ENCODE measurements at regions of chr4 and their contacts with region 1.

Region 1: DNA sequence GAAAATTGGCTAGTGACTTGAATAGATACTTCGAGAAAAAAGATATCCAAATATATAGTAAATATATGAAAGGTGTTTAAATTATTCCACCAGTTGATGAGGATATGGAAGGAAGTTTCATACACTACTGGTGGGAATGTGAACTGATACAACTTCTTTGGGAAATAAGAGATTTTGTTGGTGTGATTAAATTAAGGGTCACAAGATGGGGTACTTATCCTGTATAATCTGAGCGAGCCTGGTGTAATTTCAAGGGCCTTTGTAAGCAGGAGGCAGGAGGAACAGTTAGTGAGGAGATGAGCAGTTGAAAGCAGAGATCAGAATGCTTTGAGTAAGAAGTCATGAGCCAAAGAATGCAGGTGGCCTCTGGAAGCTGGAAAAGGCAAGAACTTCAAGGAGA is 192.2 kb downstream of the KCTD8 start:
- DNase-seq: peak in 14 of 42 donors; percentile 9 to 46 (median 24)

Region 2: DNA sequence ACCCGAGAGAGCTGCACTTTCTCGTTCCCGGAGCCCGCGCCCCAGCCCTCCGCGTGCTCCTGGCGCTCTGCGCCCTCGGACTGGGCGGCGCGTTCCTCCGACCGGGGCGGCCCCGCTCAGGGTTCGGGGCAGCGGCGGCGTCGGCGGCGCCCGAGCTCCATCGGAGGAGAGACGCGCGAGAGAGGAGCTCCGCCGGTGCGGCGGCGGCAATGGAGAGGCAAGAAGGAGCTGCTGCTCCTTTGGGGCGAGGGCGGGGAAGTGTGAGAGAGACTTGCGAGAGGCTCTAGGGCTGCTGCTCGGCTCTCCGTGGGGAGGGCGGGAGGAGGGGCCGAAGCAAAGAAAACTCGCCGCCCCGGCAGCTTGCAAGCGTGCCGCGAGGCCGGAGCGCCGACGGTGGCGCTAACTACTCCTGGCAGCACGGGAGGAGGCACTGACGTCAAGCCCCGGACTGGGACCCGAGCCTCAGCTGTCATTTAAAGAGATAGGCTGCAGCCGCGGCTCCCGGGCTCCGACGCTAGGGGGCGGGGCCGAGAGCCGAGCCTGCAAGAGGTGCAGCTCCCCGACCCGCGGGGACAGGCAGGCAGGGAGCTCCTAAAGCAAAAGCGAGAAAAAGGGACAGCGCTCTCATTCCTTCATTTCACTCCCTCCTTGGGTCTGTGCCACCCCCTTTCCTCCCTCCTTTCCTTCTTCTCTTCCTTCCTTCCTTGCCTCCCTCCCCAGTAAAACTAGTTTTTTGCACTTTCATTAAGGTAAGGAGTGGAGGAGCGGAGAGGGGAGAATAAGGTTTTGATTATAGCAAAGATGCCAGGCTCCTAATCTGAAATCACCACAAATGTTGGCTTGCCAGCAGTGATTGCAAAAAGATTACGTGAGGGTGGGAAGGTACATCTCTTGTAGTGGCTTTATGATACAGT is 192.4 kb after region 1 on chr4 and contains the start of gene KCTD8:
- intact Hi-C with region 1: loop called (anchors 10 kb)
- DNase-seq: peak; percentile 91 to 99 (median 97)